Endothelial cell of umbilical vein (primary cell): ENCODE measurements at regions of chr18 and their contacts with region 1.

Region 1: DNA sequence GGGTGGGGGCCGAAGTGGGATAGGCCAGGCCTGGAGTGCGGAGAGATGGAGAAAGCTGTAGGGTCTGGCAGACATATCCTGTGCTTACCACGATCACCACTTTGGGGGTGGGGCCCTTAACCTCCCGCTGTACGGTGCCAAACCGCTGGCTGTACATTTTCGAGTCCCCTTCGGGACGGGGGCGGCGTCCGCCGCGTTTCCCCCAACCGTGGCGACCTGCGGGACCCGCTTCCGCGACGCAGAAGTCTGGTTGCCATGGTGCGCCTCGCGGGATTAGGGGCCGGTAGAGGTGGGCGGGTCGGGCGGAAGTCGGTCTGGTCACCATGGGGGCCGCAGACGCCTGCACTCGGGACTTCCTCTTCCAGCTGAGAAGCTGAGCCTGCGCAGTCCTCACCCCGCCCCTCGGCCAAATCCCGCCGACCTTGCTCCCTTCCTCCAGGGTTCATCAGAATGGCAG is at the start of gene CFAP53:
- DNase-seq: peak; percentile 89
- H3K4me3 ChIP-seq: peak within 1 kb of the TSS; percentile 14 to 58 (median 36)
- H3K27ac ChIP-seq: no peak within 1 kb of the TSS
- H3K4me1 ChIP-seq: peaks cover 10% of the 10 kb centered on the region
- H3K27me3 ChIP-seq: peaks cover 1 to 18% of the 10 kb centered on the region in 2 experiments
- CTCF ChIP-seq: no peak
- POLR2A ChIP-seq: no peak
- total RNA-seq, gene CFAP53: 0.16 and 0.18 TPM in 2 replicates

Region 2: GRCh38 chr18:50009773-50010335 is 256.4 kb before region 1 on chr18:
- CTCF ChIA-PET with region 1: interaction called, 3 read pairs
- POLR2A ChIA-PET with region 1: no interaction called
- dilution Hi-C with region 1: no loop called
- intact Hi-C with region 1: loop called (anchors 5 kb)
- DNase-seq: peak; percentile 40
- H3K4me3 ChIP-seq: no peak overlapping the region
- H3K27ac ChIP-seq: no peak overlapping the region
- H3K4me1 ChIP-seq: no peaks in the 10 kb centered on the region
- H3K27me3 ChIP-seq: peaks cover 2% of the 10 kb centered on the region in 2 experiments
- CTCF ChIP-seq: peak; percentile 58 to 63
- POLR2A ChIP-seq: no peak

Region 3: DNA sequence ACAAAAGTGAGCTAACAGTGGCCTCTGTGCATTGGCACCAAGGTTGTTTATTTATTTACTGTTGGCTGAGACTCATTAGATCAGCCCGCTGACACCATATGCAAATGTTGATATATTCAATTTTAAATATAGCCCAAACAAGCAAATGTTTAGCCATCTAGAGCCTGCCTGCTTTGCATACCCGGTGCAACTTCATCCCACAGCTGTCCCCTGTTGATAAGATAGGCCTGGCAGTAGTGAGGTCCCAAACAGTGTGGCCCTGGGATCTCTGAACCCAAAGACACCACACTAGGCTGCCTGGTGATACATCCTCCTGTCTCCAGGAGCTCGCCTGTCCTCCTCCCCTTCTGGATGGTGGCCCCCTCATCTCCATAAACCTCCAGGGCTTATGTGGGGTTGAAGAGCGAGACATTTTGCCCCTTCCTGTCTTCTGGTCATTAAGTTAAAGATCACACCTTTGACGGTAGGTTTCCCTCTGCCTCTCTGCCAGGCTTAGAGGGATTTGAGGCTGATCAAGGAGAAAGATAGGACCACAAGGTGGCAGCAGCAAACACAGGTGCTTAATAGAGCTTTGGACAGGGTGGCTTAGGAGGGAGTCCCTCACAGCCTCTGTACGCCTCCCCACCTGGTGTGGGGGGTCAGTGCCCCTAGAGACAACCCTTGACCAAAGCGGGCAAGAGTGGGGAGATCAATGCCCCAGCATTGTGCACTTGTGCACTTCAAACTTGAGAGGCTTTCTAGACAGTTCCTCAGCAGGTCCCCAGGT is 47.7 kb before region 1 on chr18:
- CTCF ChIA-PET with region 1: interaction called, 11 read pairs
- POLR2A ChIA-PET with region 1: no interaction called
- dilution Hi-C with region 1: no loop called
- intact Hi-C with region 1: no loop called
- DNase-seq: peak; percentile 20
- H3K4me3 ChIP-seq: no peak overlapping the region
- H3K27ac ChIP-seq: no peak overlapping the region
- H3K4me1 ChIP-seq: no peaks in the 10 kb centered on the region
- H3K27me3 ChIP-seq: no peaks in the 10 kb centered on the region
- CTCF ChIP-seq: peak in 1 of 2 donors; percentile 41
- POLR2A ChIP-seq: no peak

Region 4: GRCh38 chr18:50281295-50281971 is 15.2 kb after region 1 on chr18 and contains the start of gene MBD1:
- CTCF ChIA-PET with region 1: interaction called, 44 read pairs
- POLR2A ChIA-PET with region 1: interaction called, 5 read pairs
- dilution Hi-C with region 1: no loop called
- intact Hi-C with region 1: loop called (anchors 1 kb)
- DNase-seq: peak; percentile 99
- H3K4me3 ChIP-seq: peak within 1 kb of the TSS; percentile 79 to 89 (median 84)
- H3K27ac ChIP-seq: peak within 1 kb of the TSS; percentile 60
- H3K4me1 ChIP-seq: peaks cover 25% of the 10 kb centered on the region
- H3K27me3 ChIP-seq: no peaks in the 10 kb centered on the region
- CTCF ChIP-seq: peak in 1 of 2 donors; percentile 26
- POLR2A ChIP-seq: peak; percentile 89
- total RNA-seq, gene MBD1: 77.5 and 78.6 TPM in 2 replicates

Region 5: GRCh38 chr18:50287441-50288347 is 21.4 kb after region 1 on chr18 and contains the start of gene CXXC1:
- CTCF ChIA-PET with region 1: interaction called, 3 read pairs
- POLR2A ChIA-PET with region 1: no interaction called
- dilution Hi-C with region 1: no loop called
- intact Hi-C with region 1: loop called (anchors 1 kb)
- DNase-seq: peak; percentile 100
- H3K4me3 ChIP-seq: peak within 1 kb of the TSS; percentile 76 to 88 (median 78)
- H3K27ac ChIP-seq: peak within 1 kb of the TSS; percentile 33
- H3K4me1 ChIP-seq: peaks cover 5% of the 10 kb centered on the region
- H3K27me3 ChIP-seq: peaks cover 0 to 1% of the 10 kb centered on the region in 2 experiments
- CTCF ChIP-seq: peak; percentile 35 to 69
- POLR2A ChIP-seq: peak; percentile 77
- total RNA-seq, gene CXXC1: 64.4 and 66.9 TPM in 2 replicates

Region 6: GRCh38 chr18:50315100-50315871 is 49.0 kb after region 1 on chr18:
- CTCF ChIA-PET with region 1: no interaction called
- POLR2A ChIA-PET with region 1: no interaction called
- dilution Hi-C with region 1: no loop called
- intact Hi-C with region 1: no loop called
- DNase-seq: no peak
- H3K4me3 ChIP-seq: no peak overlapping the region
- H3K27ac ChIP-seq: no peak overlapping the region
- H3K4me1 ChIP-seq: no peaks in the 10 kb centered on the region
- H3K27me3 ChIP-seq: peaks cover 0 to 3% of the 10 kb centered on the region in 2 experiments
- CTCF ChIP-seq: no peak
- POLR2A ChIP-seq: no peak

Region 7: DNA sequence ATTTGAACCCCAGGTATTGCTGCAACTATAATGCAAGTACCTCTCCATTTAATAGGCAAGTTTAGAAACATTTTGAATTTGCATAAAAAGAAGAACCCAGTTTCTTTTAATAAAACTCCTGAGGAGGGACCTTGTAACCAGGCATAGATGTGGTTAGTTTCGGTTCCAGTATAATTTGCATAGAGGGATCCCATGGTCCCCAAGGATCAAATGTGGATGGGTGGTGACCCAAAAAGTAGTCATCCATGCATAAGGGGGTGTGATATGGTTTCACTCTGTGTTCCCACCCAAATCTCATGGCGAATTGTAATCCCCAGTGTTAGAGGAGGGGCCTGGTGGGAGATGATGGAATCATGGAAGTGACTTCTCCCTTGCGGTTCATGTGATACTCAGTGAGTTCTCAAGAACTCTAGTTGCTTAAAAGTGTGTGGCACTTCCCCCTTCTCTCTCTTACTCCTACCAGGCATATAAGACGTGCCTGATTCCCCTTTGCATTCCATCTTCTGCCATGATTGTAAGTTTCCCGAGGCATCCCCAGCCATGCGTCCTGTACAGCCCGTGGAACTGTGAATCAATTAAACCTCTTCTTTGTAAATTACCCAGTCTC is 68.4 kb after region 1 on chr18:
- CTCF ChIA-PET with region 1: no interaction called
- POLR2A ChIA-PET with region 1: no interaction called
- dilution Hi-C with region 1: no loop called
- intact Hi-C with region 1: no loop called
- DNase-seq: no peak
- H3K4me3 ChIP-seq: no peak overlapping the region
- H3K27ac ChIP-seq: no peak overlapping the region
- H3K4me1 ChIP-seq: no peaks in the 10 kb centered on the region
- H3K27me3 ChIP-seq: peaks cover 2 to 3% of the 10 kb centered on the region in 2 experiments
- CTCF ChIP-seq: no peak
- POLR2A ChIP-seq: no peak

Region 8: GRCh38 chr18:50374753-50375391 is 108.6 kb after region 1 on chr18 and contains the start of gene SKA1:
- CTCF ChIA-PET with region 1: interaction called, 3 read pairs
- POLR2A ChIA-PET with region 1: no interaction called
- dilution Hi-C with region 1: no loop called
- intact Hi-C with region 1: loop called (anchors 2 kb)
- DNase-seq: peak; percentile 95
- H3K4me3 ChIP-seq: peak within 1 kb of the TSS; percentile 49 to 88 (median 58)
- H3K27ac ChIP-seq: peak within 1 kb of the TSS; percentile 21
- H3K4me1 ChIP-seq: peaks cover 9% of the 10 kb centered on the region
- H3K27me3 ChIP-seq: peaks cover 0 to 3% of the 10 kb centered on the region in 2 experiments
- CTCF ChIP-seq: no peak
- POLR2A ChIP-seq: peak; percentile 79
- total RNA-seq, gene SKA1: 21.9 and 23.9 TPM in 2 replicates